ENCODE measurements at regions of chr2 and their contacts with region 1.

Region 1: DNA sequence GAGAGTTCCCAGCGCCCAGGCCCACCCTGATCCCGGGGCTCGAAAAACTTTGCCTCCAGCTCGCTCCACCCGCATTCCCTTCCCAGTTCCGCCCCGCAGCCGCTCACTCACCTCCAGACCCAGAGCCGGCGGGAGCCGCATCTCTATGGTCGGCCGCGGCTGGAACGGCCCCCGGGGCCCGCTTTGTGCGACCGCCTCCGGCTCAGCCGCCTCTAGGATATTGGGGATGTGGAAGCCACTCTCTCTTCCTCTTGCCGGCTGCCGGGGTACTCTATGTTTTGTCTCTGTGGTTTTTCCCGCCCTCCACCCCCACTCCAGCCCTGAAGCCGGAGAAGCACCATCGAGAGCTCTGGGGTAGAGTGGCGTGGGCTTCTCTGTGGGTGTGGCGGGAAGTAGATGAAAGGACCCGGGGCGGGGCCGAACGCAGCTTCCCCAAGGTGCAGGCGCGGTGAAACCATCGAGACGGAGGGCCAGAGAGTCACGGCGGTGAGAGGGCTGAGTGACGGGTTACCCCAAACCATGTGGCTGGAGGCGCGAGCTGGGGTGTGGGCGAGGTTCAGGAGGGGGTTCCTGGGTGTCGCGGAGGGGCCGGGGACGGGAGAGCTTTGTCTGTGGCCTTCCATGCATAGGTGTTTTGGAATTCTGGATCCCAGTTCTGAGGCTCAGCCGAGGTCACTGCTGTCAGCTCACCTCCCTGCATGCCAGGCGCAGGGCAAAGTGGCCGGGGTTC is at the starts of genes BCS1L and ZNF142:
- DNase-seq: peak; percentile 60
- ATAC-seq: peak; percentile 97
- H3K4me3 ChIP-seq: peak within 1 kb of the TSS; percentile 67 to 85
- H3K27ac ChIP-seq: peak within 1 kb of the TSS; percentile 89
- H3K4me1 ChIP-seq: peaks cover 12% of the 10 kb centered on the region
- H3K27me3 ChIP-seq: no peaks in the 10 kb centered on the region
- CTCF ChIP-seq: no peak
- total RNA-seq, gene BCS1L: 42.0 TPM
- total RNA-seq, gene ZNF142: 31.3 TPM

Region 2: DNA sequence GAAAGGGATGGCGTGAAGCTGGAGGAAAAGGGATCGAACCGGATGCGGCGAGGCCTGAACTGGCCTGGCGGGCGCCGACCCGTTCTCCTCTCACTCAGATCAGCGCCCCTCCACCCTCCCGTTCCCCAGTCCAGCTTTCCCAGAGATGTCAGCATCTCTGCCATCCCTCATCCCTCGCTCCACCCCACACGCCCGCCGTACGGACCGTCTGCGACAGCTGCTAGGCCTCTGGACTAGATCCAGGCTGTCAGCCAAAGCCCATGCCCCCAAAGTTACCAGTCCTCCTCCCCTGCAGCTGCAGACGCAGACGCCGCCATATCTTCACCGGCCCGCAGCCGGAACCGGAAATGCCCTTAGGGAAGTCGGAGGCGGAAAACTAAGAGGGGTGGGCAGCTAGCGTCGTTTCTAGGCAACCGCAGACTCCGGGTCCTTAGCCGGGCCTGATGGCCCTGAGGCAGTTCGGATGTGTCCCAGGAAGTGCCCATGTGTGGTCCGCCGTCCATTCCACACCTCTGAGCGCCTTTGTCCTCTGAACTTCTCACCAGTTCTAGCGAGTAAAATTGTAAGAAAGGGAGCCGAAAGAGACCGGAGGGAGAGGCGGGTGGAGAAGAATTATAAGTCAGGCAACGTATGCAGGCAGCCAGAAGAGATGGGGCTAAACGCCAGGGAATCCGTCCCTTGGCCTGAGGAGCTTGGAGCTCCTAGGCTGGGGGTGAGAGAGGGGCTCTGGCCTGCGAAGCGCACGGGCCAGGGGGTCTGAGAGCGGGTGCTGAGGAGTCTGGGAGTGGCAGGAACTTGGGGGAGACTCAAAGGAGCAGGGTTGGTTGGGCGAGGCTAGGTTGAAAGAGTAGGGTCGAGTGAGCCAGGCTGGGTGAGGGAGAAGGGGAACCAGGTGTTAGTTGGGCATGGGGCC is 12.5 kb after region 1 on chr2 and contains the starts of genes RNF25 and STK36:
- CTCF ChIA-PET with region 1: interaction called, 4 read pairs
- POLR2A ChIA-PET with region 1: interaction called, 18 read pairs
- in situ Hi-C with region 1: no loop called
- intact Hi-C with region 1: no loop called
- DNase-seq: peak; percentile 47
- ATAC-seq: peak; percentile 99
- H3K4me3 ChIP-seq: peak within 1 kb of the TSS; percentile 92 to 97
- H3K27ac ChIP-seq: peak within 1 kb of the TSS; percentile 86
- H3K4me1 ChIP-seq: peaks cover 5% of the 10 kb centered on the region; the same call in 1 of the 2 replicates
- H3K27me3 ChIP-seq: no peaks in the 10 kb centered on the region
- CTCF ChIP-seq: no peak
- total RNA-seq, gene RNF25: 40.4 TPM
- total RNA-seq, gene STK36: 48.6 TPM

Region 3: DNA sequence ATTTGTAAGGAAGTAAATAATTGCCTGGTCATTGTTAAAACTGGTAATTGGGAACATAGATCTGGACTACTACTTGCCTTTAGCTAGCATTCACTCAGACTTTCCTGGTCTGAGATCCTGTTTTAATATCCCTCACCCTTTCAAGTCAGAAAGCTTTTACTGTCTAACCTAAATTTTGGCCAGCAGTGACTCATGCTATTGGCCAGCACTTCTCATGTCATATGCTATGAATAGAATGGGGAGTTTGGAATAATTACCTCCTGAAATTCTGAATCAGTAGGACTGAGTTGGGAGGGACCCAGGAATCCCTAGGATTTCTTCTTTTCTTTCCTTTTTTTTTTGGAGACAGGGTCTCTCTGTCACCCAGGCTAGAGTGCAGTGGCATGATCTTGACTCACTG is 31.8 kb after region 1 on chr2:
- CTCF ChIA-PET with region 1: interaction called, 10 read pairs
- POLR2A ChIA-PET with region 1: no interaction called
- in situ Hi-C with region 1: no loop called
- intact Hi-C with region 1: no loop called
- DNase-seq: no peak
- ATAC-seq: no peak
- H3K4me3 ChIP-seq: no peak overlapping the region
- H3K27ac ChIP-seq: no peak overlapping the region
- H3K4me1 ChIP-seq: no peaks in the 10 kb centered on the region
- H3K27me3 ChIP-seq: no peaks in the 10 kb centered on the region
- CTCF ChIP-seq: no peak

Region 4: GRCh38 chr2:218710687-218711549 is 51.5 kb after region 1 on chr2 and contains the start of gene TTLL4:
- CTCF ChIA-PET with region 1: interaction called, 12 read pairs
- POLR2A ChIA-PET with region 1: no interaction called
- in situ Hi-C with region 1: no loop called
- intact Hi-C with region 1: no loop called
- DNase-seq: peak; percentile 77
- ATAC-seq: peak; percentile 98
- H3K4me3 ChIP-seq: peak within 1 kb of the TSS; percentile 72 to 87
- H3K27ac ChIP-seq: peak within 1 kb of the TSS; percentile 92
- H3K4me1 ChIP-seq: peaks cover 8% of the 10 kb centered on the region
- H3K27me3 ChIP-seq: no peaks in the 10 kb centered on the region
- CTCF ChIP-seq: peak; percentile 97
- total RNA-seq, gene TTLL4: 45.6 TPM

Region 5: DNA sequence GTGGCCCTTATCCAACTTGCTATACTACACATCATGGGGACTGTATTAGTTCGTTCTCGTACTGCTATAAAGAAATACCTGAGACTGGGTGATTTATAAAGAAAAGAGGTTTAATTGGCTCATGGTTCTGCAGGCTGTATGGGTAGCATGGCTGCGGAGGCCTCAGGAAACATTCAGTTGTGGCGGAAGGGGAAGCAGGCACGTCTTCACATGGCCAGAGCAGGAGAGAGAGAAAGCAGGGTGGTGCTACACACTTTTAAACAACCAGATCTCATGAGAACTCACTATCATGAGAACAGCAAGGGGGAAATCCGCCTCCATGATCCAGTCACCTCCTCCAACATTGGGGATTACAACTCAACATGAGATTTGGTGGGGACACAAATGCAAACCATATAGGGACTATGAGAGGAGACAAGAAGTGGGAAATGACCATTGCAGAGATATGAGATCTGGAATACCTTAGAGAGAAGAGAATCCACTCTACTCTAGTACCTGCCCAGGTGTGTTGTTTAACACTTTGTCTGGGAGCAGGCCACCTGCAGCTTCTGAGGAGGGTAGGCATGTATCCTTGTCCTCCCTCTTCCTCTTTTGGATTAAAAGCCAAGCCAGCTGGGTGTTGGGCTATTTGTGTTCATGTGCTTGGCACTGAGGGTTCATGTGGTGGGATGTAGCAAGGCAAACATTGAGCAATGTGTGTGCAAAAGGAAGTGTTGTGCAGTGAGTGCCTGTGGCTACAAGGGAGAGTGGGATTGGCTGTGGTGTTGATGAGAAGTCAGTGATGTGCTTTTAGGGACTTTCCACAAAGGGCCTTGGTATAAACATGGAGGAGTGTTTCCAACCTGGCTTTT is 74.0 kb after region 1 on chr2:
- CTCF ChIA-PET with region 1: no interaction called
- POLR2A ChIA-PET with region 1: interaction called, 13 read pairs
- in situ Hi-C with region 1: no loop called
- intact Hi-C with region 1: no loop called
- DNase-seq: no peak
- ATAC-seq: peak; percentile 54
- H3K4me3 ChIP-seq: no peak overlapping the region
- H3K27ac ChIP-seq: no peak overlapping the region; the same call in 1 of the 2 replicates
- H3K4me1 ChIP-seq: peaks cover 19% of the 10 kb centered on the region
- H3K27me3 ChIP-seq: no peaks in the 10 kb centered on the region
- CTCF ChIP-seq: no peak

Region 6: DNA sequence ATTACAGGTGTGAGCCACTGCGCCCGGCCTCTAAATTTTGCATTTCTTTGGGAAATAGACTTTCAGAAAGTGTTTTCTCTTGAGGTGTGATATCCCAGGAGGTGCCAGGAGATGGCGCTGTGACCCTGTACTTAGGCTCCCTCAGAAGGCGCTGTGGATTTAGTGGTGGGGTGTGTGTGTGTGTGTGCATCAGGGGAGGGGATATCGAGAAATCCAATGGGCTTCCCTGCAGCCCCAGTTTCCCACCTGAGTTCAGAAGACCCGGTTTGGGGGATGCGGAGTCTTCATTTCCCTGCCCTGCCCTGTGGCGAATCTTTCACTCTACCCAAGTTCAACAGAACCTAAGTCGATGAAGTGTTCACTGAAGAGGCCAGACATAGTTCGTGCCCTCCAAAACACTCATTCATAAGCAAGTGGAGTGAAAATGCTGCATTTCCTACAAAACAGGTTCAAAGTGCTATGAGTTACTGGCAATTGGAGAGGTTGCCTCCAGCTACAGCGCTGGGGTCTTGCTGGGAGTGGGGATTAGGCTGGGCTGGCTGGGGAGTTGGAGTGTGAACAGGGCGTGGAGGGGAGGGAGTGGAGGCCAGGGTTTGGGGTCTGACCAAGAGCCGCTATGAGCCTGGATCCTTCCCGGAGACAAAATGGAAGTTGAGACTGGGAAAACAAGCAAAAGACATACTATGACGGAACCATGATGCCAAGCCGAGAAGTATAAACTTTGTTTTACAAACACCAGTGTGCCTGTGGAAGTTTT is 193.7 kb after region 1 on chr2:
- CTCF ChIA-PET with region 1: interaction called, 16 read pairs
- POLR2A ChIA-PET with region 1: interaction called, 3 read pairs
- in situ Hi-C with region 1: no loop called
- intact Hi-C with region 1: no loop called
- DNase-seq: peak; percentile 38
- ATAC-seq: peak; percentile 62
- H3K4me3 ChIP-seq: no peak overlapping the region
- H3K27ac ChIP-seq: no peak overlapping the region
- H3K4me1 ChIP-seq: peaks cover 17% of the 10 kb centered on the region
- H3K27me3 ChIP-seq: no peaks in the 10 kb centered on the region
- CTCF ChIP-seq: peak; percentile 90

Measured in Panc1 (cell line).